GM10248 (cell line): ENCODE measurements at regions of chr5 and their contacts with region 1.

Region 1: DNA sequence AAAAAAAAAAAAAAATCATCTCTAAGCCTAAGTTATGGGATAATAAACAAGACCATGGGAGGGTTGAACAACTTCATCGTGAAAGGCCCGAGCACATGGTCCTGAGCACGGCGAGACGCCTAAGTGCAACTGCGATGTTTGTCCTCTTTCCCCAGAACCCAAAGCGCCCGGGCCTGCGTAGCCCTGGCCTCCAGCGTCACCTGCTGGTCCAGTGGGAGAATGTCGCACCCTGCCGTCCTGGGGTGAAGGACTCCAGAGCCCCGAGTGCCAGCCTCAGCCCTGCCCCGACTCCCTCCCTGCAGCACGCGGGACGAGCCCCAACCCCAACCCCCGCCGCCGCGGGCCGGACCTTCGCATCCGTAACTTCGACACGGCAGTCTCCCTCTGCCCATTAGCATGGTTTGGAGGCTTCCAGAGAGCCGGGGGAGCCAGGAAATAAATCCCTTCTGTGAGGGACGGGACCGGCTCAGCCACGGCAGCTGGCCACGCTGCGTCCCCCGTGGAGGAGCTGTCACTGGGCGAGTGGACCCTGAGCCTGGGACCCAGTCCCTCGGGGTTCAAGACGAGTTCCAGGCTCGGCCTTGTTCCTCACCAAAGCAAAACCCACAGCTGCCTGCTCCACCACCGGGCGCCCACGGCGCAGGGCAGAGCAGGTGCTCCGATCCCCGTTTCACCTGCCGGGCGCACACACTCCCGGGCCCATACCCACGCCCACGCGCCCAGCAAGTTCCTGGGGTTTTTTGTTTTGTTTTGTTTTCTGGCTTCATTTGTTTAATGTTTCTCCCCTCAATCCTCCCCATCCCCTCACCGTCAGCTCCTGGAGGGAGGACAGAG is 132.5 kb upstream of the HAND1 start:
- DNase-seq: peak; percentile 92
- CTCF ChIP-seq: peak; percentile 97

Region 2: DNA sequence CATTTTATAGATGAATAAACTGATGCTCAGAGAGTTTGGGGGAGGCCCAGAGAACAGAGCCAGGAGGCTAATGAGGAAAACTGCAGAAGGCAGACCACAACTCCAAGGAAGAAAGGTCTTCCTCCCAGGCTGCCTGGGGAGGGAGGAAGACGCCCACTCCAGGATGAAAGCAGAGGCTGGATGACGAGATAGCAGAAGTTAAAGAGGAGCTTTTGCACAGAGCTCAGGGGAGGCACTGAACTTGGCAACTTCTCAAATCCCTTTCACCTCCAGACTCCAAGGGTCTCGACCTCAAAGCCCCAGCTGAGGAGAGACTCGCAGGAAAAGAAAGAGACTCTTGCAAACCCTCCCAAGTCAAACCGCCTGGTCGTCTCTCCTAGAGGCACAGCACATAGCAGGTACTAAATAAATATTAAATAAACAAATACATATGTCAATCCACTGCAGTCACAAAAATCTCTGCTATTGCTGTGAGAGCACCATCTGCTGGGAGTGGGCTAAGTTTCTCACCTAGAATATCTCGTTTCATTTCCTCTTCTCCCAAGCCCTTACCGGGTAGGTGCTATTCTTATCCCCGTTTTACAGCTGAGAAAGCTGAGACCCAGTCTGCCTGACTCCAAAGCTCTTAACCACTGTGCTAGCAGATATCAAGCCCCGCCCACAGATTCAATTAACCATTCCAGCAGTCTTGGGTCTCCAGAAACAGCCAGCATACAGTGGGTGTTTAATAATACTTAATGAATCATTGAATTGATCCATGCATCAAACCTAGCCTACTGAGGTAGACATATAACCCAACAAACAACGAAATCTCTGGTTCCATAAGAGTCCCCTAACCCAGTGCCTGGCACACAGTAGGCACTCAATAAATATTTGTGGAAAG is 34.8 kb before region 1 on chr5:
- CTCF ChIA-PET with region 1: interaction called, 14 read pairs
- POLR2A ChIA-PET with region 1: no interaction called
- DNase-seq: peak; percentile 76
- CTCF ChIP-seq: peak; percentile 25